A673 (cell line): ENCODE measurements at regions of chr15 and their contacts with region 1.

Region 1: GRCh38 chr15:41779662-41780157 is 5.4 kb downstream of the MAPKBP1 start:
- DNase-seq: no peak
- H3K4me3 ChIP-seq: no peak overlapping the region
- H3K27ac ChIP-seq: no peak overlapping the region
- H3K4me1 ChIP-seq: peaks cover 24% of the 10 kb centered on the region
- H3K27me3 ChIP-seq: no peaks in the 10 kb centered on the region
- CTCF ChIP-seq: no peak

Region 2: DNA sequence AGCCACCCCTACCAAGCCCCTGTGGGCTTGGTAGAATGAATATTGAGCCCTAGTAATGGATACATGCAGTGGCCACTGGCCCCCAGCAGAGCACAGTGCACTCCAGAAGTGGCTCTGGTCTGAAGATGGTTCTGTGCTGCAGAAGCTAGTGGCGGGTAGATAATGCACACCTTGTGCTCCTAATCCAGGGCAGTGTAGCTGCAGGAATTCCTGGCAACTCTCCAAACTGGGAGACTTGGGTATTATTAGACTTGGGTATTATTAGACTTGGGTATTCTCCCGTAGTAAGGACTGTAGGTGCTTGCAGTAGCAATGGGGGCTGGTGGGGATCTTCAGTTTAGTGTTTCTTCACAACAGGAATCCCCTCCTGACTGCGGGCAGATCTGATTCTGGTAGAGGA is 412.3 kb before region 1 on chr15:
- CTCF ChIA-PET with region 1: no interaction called
- POLR2A ChIA-PET with region 1: interaction called, 22 read pairs
- intact Hi-C with region 1: no loop called
- DNase-seq: no peak
- H3K4me3 ChIP-seq: no peak overlapping the region
- H3K27ac ChIP-seq: no peak overlapping the region
- H3K4me1 ChIP-seq: no peaks in the 10 kb centered on the region
- H3K27me3 ChIP-seq: no peaks in the 10 kb centered on the region
- CTCF ChIP-seq: no peak

Region 3: GRCh38 chr15:41568350-41569017 is 211.2 kb before region 1 on chr15:
- CTCF ChIA-PET with region 1: no interaction called
- POLR2A ChIA-PET with region 1: no interaction called
- intact Hi-C with region 1: no loop called
- DNase-seq: no peak
- H3K4me3 ChIP-seq: no peak overlapping the region
- H3K27ac ChIP-seq: no peak overlapping the region
- H3K4me1 ChIP-seq: peaks cover 13% of the 10 kb centered on the region
- H3K27me3 ChIP-seq: no peaks in the 10 kb centered on the region
- CTCF ChIP-seq: no peak

Region 4: DNA sequence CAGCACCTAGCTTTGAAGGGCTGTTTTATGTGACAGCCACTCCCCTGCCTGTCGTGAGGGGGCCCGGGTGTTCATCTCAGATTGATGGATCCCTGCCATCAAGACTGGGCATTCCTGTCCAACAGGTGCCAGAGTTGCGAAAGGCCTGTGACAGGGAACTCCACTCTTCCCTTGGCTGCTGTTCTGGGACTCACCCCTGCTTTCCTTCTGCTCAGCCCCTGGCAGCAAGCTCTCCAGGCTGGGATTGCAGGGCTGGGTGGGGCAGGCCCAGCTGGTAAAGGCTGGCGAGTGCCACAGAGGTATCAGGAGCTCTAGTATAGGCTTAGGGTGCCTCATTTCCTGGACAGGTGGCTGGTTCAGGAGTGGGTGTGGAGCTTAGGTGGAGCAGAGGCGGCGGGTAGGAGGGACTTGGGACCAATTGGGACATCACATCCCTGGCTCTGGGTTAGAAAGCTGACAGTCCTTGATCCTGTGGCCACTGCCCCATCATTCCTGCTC is 58.7 kb after region 1 on chr15 and contains the start of gene PLA2G4B:
- CTCF ChIA-PET with region 1: no interaction called
- POLR2A ChIA-PET with region 1: no interaction called
- intact Hi-C with region 1: no loop called
- DNase-seq: no peak
- H3K4me3 ChIP-seq: no peak within 1 kb of the TSS
- H3K27ac ChIP-seq: no peak within 1 kb of the TSS
- H3K4me1 ChIP-seq: peaks cover 13% of the 10 kb centered on the region
- H3K27me3 ChIP-seq: no peaks in the 10 kb centered on the region
- CTCF ChIP-seq: no peak
- total RNA-seq, gene PLA2G4B: 7.4 and 12.0 TPM in 2 replicates